ENCODE measurements at regions of chr15 and their contacts with region 1.

Region 1: GRCh38 chr15:39887832-39888231 is 32.2 kb downstream of the GPR176 start:
- DNase-seq: no peak
- H3K4me3 ChIP-seq: no peak overlapping the region
- H3K27ac ChIP-seq: no peak overlapping the region
- H3K4me1 ChIP-seq: peaks cover 2% of the 10 kb centered on the region
- H3K27me3 ChIP-seq: no peaks in the 10 kb centered on the region
- CTCF ChIP-seq: no peak
- EP300 ChIP-seq: no peak
- POLR2A ChIP-seq: no peak

Region 2: DNA sequence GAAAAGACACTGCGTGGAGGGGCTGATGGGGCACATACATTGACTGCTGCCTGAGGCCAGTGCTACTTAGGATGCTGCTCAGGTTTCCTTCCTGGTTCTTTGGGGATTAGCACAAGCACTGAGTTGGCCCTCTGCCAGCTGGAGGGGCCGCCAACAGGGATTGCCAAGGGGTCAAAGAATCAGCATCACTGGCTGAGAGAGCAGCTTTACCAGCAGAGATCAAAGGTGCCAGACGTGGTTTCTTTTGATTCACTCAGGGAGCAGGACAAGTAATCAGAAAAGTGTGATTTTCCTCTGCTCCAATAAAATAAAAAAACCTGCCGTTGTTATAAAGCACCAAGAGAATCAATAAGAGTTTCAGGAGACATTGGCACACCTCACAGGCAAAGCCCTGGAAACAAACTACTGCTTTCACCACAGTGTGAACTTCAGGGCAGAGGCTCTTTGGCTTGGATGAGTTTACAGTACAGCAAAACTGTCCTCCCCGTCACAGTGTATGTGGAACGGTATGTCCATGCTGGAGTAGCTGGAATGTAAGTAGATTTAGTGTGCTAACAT is 59.4 kb before region 1 on chr15:
- intact Hi-C with region 1: loop called in 1 of 4 experiments (anchors 10 kb)
- DNase-seq: peak in 2 of 5 donors; percentile 25 to 48
- H3K4me3 ChIP-seq: no peak overlapping the region
- H3K27ac ChIP-seq: no peak overlapping the region
- H3K4me1 ChIP-seq: no peaks in the 10 kb centered on the region
- H3K27me3 ChIP-seq: no peaks in the 10 kb centered on the region
- CTCF ChIP-seq: no peak
- EP300 ChIP-seq: no peak
- POLR2A ChIP-seq: no peak

Measured in ovary (tissue), 10 donors.